Activated T-helper 2 cell treated with anti-CD3 and anti-CD28 coated beads, Interferon-gamma antibody, Interleukin-2, Interleukin-4, amounts not matched to agents 10 μg/mL and 5 μg/mL and 100 μg/mL, durations not matched to agents 14 hours and 24 hours and 36 hours (primary cell): ENCODE measurements at regions of chr1 and their contacts with region 1.

Region 1: DNA sequence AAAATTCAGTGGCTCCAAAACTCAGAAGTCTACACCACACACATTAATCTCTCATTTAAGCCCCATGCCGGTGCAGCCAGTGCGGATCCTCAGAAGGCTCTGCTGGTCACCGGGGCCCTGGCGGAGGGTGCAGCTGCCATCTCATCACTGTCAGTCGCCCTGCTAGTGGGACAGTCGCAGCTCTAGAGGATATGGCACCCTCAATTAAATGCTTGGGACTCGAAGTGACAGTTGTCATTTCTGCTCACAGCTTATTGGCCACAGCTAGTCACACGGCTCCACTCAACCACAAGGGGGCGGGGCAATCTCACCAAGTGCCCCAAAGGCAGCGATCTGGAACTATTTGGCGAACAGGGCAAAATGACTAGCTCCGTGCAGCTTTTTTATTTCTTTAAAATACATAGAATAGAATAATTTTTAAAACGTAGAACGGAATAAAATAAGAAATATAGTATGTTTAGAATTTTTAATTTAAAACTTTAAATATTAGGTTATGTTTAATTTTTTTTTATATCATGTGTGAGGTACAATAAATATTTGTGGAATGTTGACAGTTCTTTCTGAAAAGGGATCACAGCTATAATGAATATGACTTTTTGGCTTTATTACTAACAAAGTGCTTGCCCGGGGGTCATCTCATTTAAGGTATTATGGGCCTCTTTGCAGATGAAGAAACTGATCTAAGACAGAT is 8.0 kb upstream of the MAN1C1 start:
- DNase-seq: peak; percentile 80
- H3K4me3 Mint-ChIP-seq: no peak overlapping the region
- H3K27ac Mint-ChIP-seq: no peak overlapping the region
- H3K4me1 Mint-ChIP-seq: no peaks in the 10 kb centered on the region
- H3K27me3 Mint-ChIP-seq: peaks cover 69% of the 10 kb centered on the region

Region 2: GRCh38 chr1:25631750-25632485 is 23.3 kb after region 1 on chr1:
- intact Hi-C with region 1: no loop called
- DNase-seq: no peak
- H3K4me3 Mint-ChIP-seq: peak overlapping the region; percentile 50
- H3K27ac Mint-ChIP-seq: peak overlapping the region; percentile 67
- H3K4me1 Mint-ChIP-seq: peaks cover 32% of the 10 kb centered on the region
- H3K27me3 Mint-ChIP-seq: peaks cover 54% of the 10 kb centered on the region

Region 3: GRCh38 chr1:25642574-25643108 is 34.0 kb after region 1 on chr1:
- intact Hi-C with region 1: loop called (anchors 5 kb)
- DNase-seq: peak; percentile 75
- H3K4me3 Mint-ChIP-seq: peak overlapping the region; percentile 63
- H3K27ac Mint-ChIP-seq: peak overlapping the region; percentile 44
- H3K4me1 Mint-ChIP-seq: peaks cover 27% of the 10 kb centered on the region
- H3K27me3 Mint-ChIP-seq: peaks cover 78% of the 10 kb centered on the region

Region 4: DNA sequence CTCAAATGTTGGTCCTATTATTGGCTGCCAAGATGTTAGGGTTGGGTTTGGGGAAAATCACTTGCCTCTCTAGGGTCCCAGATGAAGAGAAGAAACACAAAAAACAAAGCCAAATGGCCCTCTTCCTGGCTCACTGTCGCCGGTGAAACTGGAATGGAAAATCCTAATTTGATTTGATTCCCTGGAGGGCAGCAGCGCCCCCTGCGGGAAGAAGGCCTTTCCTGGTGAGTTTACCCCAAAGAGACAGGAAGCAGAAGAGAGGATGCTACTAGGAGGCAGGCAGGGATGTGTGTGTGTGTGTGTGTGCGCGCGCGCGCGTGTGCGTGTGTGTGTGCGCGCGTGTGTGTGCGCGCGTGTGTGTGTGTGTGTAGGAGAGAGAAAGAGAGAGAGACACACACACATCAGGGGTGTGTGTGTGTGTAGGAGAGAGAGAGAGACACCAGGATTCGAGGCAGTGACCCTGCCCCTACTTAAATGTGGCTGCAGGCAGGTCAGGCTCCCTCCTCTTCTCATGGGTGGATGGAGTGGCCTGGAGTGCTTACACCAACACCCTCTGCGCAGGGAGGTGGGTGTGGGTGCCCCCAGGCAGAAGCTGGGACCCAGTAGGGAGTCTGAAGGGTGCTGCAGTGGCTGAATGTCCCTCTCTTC is 188.3 kb after region 1 on chr1:
- intact Hi-C with region 1: loop called (anchors 2 kb)
- DNase-seq: peak; percentile 67
- H3K4me3 Mint-ChIP-seq: no peak overlapping the region
- H3K27ac Mint-ChIP-seq: no peak overlapping the region
- H3K4me1 Mint-ChIP-seq: peaks cover 15% of the 10 kb centered on the region
- H3K27me3 Mint-ChIP-seq: peaks cover 52% of the 10 kb centered on the region